IMR-90 (cell line): ENCODE measurements at regions of chr4 and their contacts with region 1.

Region 1: GRCh38 chr4:133921280-133922195 is 280.1 kb downstream of the PABPC4L start:
- DNase-seq: peak; percentile 34
- ATAC-seq: no peak
- H3K4me3 ChIP-seq: no peak overlapping the region
- H3K27ac ChIP-seq: no peak overlapping the region
- H3K4me1 ChIP-seq: no peaks in the 10 kb centered on the region
- H3K27me3 ChIP-seq: no peaks in the 10 kb centered on the region
- CTCF ChIP-seq: peak; percentile 46
- POLR2A ChIP-seq: no peak
- RAD21 ChIP-seq: peak; percentile 46

Region 2: GRCh38 chr4:133320576-133321170 is 600.9 kb before region 1 on chr4:
- CTCF ChIA-PET with region 1: no interaction called
- POLR2A ChIA-PET with region 1: no interaction called
- dilution Hi-C with region 1: no loop called
- in situ Hi-C with region 1: no loop called
- intact Hi-C with region 1: loop called (anchors 1 kb)
- DNase-seq: peak; percentile 3
- ATAC-seq: peak; percentile 44; the same call in 1 of the 2 replicates
- H3K4me3 ChIP-seq: no peak overlapping the region
- H3K27ac ChIP-seq: no peak overlapping the region
- H3K4me1 ChIP-seq: no peaks in the 10 kb centered on the region
- H3K27me3 ChIP-seq: no peaks in the 10 kb centered on the region
- CTCF ChIP-seq: peak; percentile 36; the same call in 1 of the 2 replicates
- POLR2A ChIP-seq: no peak
- RAD21 ChIP-seq: peak; percentile 34; the same call in 1 of the 2 replicates